ENCODE measurements at regions of chr3 and their contacts with region 1.

Region 1: DNA sequence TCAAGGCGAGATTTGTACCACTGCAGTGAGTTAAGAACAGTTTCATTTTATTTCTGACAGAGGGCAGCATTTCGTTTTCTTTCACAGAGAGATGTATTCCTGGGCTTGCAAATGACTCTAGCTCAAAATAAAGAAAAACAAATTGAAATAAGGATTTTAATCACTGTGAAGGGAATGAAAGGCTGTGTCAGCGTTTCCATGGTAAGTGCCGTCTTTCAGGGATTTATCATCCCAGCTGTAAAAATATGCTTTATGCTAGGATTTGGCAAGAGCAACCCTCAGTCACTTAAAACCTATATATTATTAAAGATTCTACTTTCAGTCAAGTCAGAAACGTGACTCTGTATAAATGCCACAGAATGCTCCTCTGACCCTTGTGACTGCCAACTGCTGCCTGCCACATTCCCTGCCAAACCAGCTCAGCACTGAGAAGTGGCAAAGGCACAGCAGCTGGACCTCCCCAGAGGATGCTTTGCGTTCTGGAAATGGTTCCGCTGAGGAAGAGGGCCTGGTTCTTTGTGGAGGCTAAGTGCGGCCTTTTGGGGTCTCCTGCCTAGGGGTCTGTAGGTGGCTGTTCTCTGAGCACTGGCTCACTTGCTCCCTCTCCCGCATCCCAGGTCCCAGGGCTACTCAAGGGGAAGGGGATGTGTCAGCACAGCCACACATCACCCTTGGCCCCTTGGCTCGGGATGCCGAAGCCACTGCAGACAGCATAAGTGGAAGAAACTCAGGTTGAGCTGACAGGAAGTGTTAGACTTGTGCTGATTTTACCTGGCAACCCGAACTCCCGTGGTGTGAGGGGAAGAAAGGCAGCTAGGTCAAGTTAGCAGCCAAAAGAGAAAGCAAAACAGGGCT is 56.6 kb upstream of the POMGNT2 start:
- DNase-seq: peak; percentile 29 to 88 (median 56)
- ATAC-seq: peak; percentile 92
- H3K4me3 ChIP-seq: peak overlapping the region; percentile 35
- H3K4me3 Mint-ChIP-seq: peak overlapping the region; percentile 76
- H3K27ac ChIP-seq: peak overlapping the region; percentile 44 to 91
- H3K27ac Mint-ChIP-seq: peak overlapping the region; percentile 91
- H3K4me1 ChIP-seq: peaks cover 27% of the 10 kb centered on the region
- H3K4me1 Mint-ChIP-seq: peaks cover 29% of the 10 kb centered on the region
- H3K27me3 ChIP-seq: no peaks in the 10 kb centered on the region
- H3K27me3 Mint-ChIP-seq: no peaks in the 10 kb centered on the region
- CTCF ChIP-seq: peak; percentile 73

Region 2: DNA sequence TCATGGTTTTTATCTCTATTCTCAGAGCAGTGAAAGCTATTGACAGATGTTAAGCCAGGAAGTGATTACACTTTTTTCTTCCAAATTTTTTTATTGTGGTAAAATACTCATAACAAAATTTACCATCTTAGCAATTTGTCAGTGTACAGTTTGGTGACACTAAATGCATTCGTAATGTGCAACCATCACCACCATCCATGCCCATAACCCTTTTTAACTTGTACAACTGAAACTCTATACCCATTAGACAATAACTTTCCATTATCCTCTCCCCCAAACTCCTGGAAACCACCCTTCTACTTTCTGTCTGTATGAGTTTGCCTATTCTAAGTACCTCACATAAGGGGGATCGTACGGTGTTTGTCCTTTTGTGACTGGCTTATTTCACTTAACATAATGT is 41.5 kb before region 1 on chr3:
- CTCF ChIA-PET with region 1: no interaction called
- POLR2A ChIA-PET with region 1: no interaction called
- intact Hi-C with region 1: no loop called
- DNase-seq: no peak
- ATAC-seq: no peak
- H3K4me3 ChIP-seq: no peak overlapping the region
- H3K4me3 Mint-ChIP-seq: no peak overlapping the region
- H3K27ac ChIP-seq: no peak overlapping the region
- H3K27ac Mint-ChIP-seq: no peak overlapping the region
- H3K4me1 ChIP-seq: no peaks in the 10 kb centered on the region
- H3K4me1 Mint-ChIP-seq: no peaks in the 10 kb centered on the region
- H3K27me3 ChIP-seq: no peaks in the 10 kb centered on the region
- H3K27me3 Mint-ChIP-seq: peaks cover 5% of the 10 kb centered on the region
- CTCF ChIP-seq: no peak

Region 3: GRCh38 chr3:43180027-43180426 is 17.6 kb after region 1 on chr3:
- CTCF ChIA-PET with region 1: interaction called, 10 read pairs
- POLR2A ChIA-PET with region 1: interaction called, 53 read pairs
- intact Hi-C with region 1: loop called in 1 of 2 experiments (anchors 1 kb)
- DNase-seq: peak in 11 of 14 experiments; percentile 14 to 87 (median 35)
- ATAC-seq: peak; percentile 86
- H3K4me3 ChIP-seq: peak overlapping the region; percentile 7
- H3K4me3 Mint-ChIP-seq: peak overlapping the region; percentile 71
- H3K27ac ChIP-seq: peak overlapping the region; percentile 49 to 77
- H3K27ac Mint-ChIP-seq: peak overlapping the region; percentile 91
- H3K4me1 ChIP-seq: peaks cover 54% of the 10 kb centered on the region
- H3K4me1 Mint-ChIP-seq: peaks cover 67% of the 10 kb centered on the region
- H3K27me3 ChIP-seq: no peaks in the 10 kb centered on the region
- H3K27me3 Mint-ChIP-seq: no peaks in the 10 kb centered on the region
- CTCF ChIP-seq: no peak

Region 4: DNA sequence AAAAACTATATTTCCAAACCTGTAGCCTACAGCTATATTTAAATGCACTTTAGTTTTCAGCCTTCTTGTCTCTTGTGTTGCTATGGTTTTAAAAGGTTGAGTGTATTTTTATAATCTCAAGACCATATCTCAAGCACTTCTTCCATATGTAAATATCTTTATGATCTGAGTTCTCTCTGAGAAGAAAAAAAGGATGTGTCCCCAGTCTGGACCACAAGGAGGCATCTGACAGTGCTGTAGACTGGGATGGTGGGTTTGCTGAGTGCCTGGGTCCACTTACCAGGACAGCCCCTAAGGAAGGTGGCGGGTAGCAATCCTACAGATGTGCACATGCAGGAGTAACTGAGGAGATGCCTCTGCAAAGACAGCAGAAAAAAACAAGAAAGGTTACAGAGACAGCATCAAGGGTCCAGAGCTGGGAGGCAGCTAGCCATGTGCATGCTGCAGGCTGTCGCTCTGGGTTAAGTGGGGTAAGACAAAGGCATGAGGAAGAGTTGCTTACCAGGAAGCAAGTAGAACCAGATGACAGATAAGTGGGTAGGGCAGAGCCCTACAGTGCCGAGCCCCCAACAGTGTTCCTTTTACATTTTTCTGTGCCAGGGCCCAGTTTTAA is 53.3 kb after region 1 on chr3:
- CTCF ChIA-PET with region 1: no interaction called
- POLR2A ChIA-PET with region 1: interaction called, 23 read pairs
- intact Hi-C with region 1: loop called in 1 of 2 experiments (anchors 5 kb)
- DNase-seq: peak in 4 of 14 experiments; percentile 19 to 35 (median 28)
- ATAC-seq: peak; percentile 45
- H3K4me3 ChIP-seq: no peak overlapping the region
- H3K4me3 Mint-ChIP-seq: peak overlapping the region; percentile 26
- H3K27ac ChIP-seq: no peak overlapping the region
- H3K27ac Mint-ChIP-seq: peak overlapping the region; percentile 75
- H3K4me1 ChIP-seq: peaks cover 23% of the 10 kb centered on the region
- H3K4me1 Mint-ChIP-seq: peaks cover 54% of the 10 kb centered on the region
- H3K27me3 ChIP-seq: no peaks in the 10 kb centered on the region
- H3K27me3 Mint-ChIP-seq: no peaks in the 10 kb centered on the region
- CTCF ChIP-seq: no peak

Region 5: DNA sequence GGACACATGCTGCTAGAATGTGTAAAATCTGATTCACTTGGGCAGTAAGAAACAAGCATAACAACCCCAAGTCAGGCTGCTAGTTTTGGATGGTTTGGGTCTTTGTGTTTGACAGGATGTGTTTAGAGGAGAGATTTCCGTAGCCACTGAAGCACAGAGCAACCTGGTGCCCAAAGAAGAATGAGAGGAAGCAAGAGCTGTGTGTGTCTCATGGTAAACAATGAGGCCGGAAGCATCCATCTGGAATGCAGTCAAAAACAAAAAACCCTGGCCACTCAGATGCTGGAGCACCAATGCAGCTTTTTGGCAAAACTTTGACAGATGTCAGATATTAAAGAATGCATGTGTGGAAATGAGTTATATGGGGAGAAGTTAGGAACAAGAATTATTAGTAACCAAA is 84.5 kb after region 1 on chr3:
- CTCF ChIA-PET with region 1: no interaction called
- POLR2A ChIA-PET with region 1: interaction called, 11 read pairs
- intact Hi-C with region 1: no loop called
- DNase-seq: peak in 6 of 14 experiments; percentile 5 to 62 (median 23)
- ATAC-seq: peak; percentile 82
- H3K4me3 ChIP-seq: no peak overlapping the region
- H3K4me3 Mint-ChIP-seq: no peak overlapping the region
- H3K27ac ChIP-seq: peak overlapping the region; percentile 2 to 39
- H3K27ac Mint-ChIP-seq: peak overlapping the region; percentile 18
- H3K4me1 ChIP-seq: peaks cover 46% of the 10 kb centered on the region
- H3K4me1 Mint-ChIP-seq: peaks cover 66% of the 10 kb centered on the region
- H3K27me3 ChIP-seq: no peaks in the 10 kb centered on the region
- H3K27me3 Mint-ChIP-seq: no peaks in the 10 kb centered on the region
- CTCF ChIP-seq: no peak

Region 6: GRCh38 chr3:43296565-43296964 is 134.1 kb after region 1 on chr3:
- CTCF ChIA-PET with region 1: interaction called, 3 read pairs
- POLR2A ChIA-PET with region 1: interaction called, 42 read pairs
- intact Hi-C with region 1: no loop called
- DNase-seq: peak; percentile 32 to 90 (median 58)
- ATAC-seq: peak; percentile 91
- H3K4me3 ChIP-seq: peak overlapping the region; percentile 35
- H3K4me3 Mint-ChIP-seq: peak overlapping the region; percentile 73
- H3K27ac ChIP-seq: peak overlapping the region; percentile 59 to 68
- H3K27ac Mint-ChIP-seq: peak overlapping the region; percentile 91
- H3K4me1 ChIP-seq: peaks cover 53% of the 10 kb centered on the region
- H3K4me1 Mint-ChIP-seq: peaks cover 87% of the 10 kb centered on the region
- H3K27me3 ChIP-seq: no peaks in the 10 kb centered on the region
- H3K27me3 Mint-ChIP-seq: no peaks in the 10 kb centered on the region
- CTCF ChIP-seq: no peak

Region 7: GRCh38 chr3:43378066-43378935 is 215.8 kb after region 1 on chr3:
- CTCF ChIA-PET with region 1: interaction called, 9 read pairs
- POLR2A ChIA-PET with region 1: interaction called, 14 read pairs
- intact Hi-C with region 1: loop called (anchors 1 kb)
- DNase-seq: peak; percentile 62 to 86 (median 68)
- ATAC-seq: peak; percentile 99
- H3K4me3 ChIP-seq: no peak overlapping the region
- H3K4me3 Mint-ChIP-seq: no peak overlapping the region
- H3K27ac ChIP-seq: no peak overlapping the region
- H3K27ac Mint-ChIP-seq: peak overlapping the region; percentile 50
- H3K4me1 ChIP-seq: peaks cover 16% of the 10 kb centered on the region
- H3K4me1 Mint-ChIP-seq: peaks cover 17% of the 10 kb centered on the region
- H3K27me3 ChIP-seq: no peaks in the 10 kb centered on the region
- H3K27me3 Mint-ChIP-seq: no peaks in the 10 kb centered on the region
- CTCF ChIP-seq: peak; percentile 86

Region 8: DNA sequence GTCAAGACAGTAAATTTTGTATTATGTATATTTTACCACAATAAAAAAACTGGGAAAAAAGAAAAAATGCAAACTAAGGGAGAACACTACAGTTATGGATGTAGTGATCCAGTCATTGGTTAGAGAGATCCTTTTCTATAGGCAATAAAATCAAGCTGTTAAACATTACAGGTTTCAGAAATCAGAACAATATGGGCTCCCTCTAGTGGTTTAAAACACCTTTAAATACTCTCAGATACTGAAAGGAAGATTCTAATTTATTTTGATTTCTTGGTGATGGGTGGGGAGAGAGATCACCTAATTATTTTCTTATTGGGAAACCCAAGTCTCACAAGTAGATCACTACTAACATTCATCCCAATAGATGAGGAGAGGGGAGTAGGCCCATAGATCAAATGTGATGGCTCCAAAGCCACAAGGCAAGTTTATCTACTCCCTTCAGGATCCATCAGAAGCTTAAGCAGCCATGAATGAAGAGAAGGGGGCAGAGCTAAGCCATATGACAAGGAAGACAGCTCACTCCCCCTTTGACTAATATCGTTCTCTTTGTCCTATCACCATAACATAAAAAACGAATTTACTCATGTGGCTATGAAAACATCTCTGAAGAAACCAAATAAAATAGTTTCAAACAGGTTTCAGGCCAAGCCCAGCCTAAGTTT is 340.7 kb after region 1 on chr3:
- CTCF ChIA-PET with region 1: interaction called, 24 read pairs
- POLR2A ChIA-PET with region 1: interaction called, 15 read pairs
- intact Hi-C with region 1: loop called (anchors 1 kb)
- DNase-seq: peak in 3 of 14 experiments; percentile 64 to 71 (median 67)
- ATAC-seq: peak; percentile 63
- H3K4me3 ChIP-seq: no peak overlapping the region
- H3K4me3 Mint-ChIP-seq: no peak overlapping the region
- H3K27ac ChIP-seq: no peak overlapping the region
- H3K27ac Mint-ChIP-seq: peak overlapping the region; percentile 31
- H3K4me1 ChIP-seq: peaks cover 26% of the 10 kb centered on the region
- H3K4me1 Mint-ChIP-seq: peaks cover 50% of the 10 kb centered on the region
- H3K27me3 ChIP-seq: no peaks in the 10 kb centered on the region
- H3K27me3 Mint-ChIP-seq: no peaks in the 10 kb centered on the region
- CTCF ChIP-seq: peak; percentile 68